CD8-positive, alpha-beta T cell (primary cell): ENCODE measurements at regions of chr4 and their contacts with region 1.

Region 1: GRCh38 chr4:27010334-27010940 is 149.8 kb downstream of the STIM2 start:
- DNase-seq: peak; percentile 23 to 76 (median 64)
- ATAC-seq: peak; percentile 90
- H3K4me3 ChIP-seq: no peak overlapping the region
- H3K4me3 Mint-ChIP-seq: no peak overlapping the region
- H3K27ac ChIP-seq: no peak overlapping the region
- H3K27ac Mint-ChIP-seq: peak overlapping the region; percentile 72
- H3K4me1 ChIP-seq: no peaks in the 10 kb centered on the region
- H3K4me1 Mint-ChIP-seq: peaks cover 13% of the 10 kb centered on the region
- H3K27me3 ChIP-seq: no peaks in the 10 kb centered on the region
- H3K27me3 Mint-ChIP-seq: no peaks in the 10 kb centered on the region
- CTCF ChIP-seq: peak; percentile 98

Region 2: DNA sequence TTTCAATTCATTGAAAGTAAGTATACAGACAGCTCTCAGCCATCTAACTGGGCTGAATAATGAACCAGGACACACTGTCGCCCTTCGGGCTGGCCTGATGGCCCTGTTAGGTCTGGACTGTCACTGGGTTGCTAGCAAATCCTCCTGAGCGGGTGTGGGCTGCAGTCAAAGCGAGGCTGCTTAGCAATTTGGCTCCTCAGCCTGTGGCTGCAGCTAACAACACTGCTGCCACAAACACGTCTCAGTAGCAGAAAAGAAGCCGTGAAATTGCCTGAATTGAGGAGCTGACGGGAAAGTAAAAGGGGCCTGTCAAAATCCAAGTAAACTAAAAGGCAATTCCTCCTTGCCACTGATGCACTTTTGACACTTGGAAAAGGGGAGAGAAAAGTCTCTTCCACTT is 1023.6 kb before region 1 on chr4:
- CTCF ChIA-PET with region 1: interaction called, 3 read pairs
- POLR2A ChIA-PET with region 1: no interaction called
- intact Hi-C with region 1: loop called in 1 of 2 experiments (anchors 5 kb)
- DNase-seq: no peak
- ATAC-seq: no peak
- H3K4me3 ChIP-seq: no peak overlapping the region
- H3K4me3 Mint-ChIP-seq: no peak overlapping the region
- H3K27ac ChIP-seq: no peak overlapping the region
- H3K27ac Mint-ChIP-seq: no peak overlapping the region
- H3K4me1 ChIP-seq: no peaks in the 10 kb centered on the region
- H3K4me1 Mint-ChIP-seq: peaks cover 4% of the 10 kb centered on the region
- H3K27me3 ChIP-seq: peaks cover 0 to under 1% of the 10 kb centered on the region in 2 experiments
- H3K27me3 Mint-ChIP-seq: peaks cover 5% of the 10 kb centered on the region
- CTCF ChIP-seq: no peak

Region 3: GRCh38 chr4:26433556-26433955 is 576.9 kb before region 1 on chr4:
- CTCF ChIA-PET with region 1: interaction called, 3 read pairs
- POLR2A ChIA-PET with region 1: no interaction called
- intact Hi-C with region 1: loop called in 1 of 2 experiments (anchors 1 kb)
- DNase-seq: no peak
- ATAC-seq: no peak
- H3K4me3 ChIP-seq: no peak overlapping the region
- H3K4me3 Mint-ChIP-seq: no peak overlapping the region
- H3K27ac ChIP-seq: no peak overlapping the region
- H3K27ac Mint-ChIP-seq: no peak overlapping the region
- H3K4me1 ChIP-seq: no peaks in the 10 kb centered on the region
- H3K4me1 Mint-ChIP-seq: no peaks in the 10 kb centered on the region
- H3K27me3 ChIP-seq: no peaks in the 10 kb centered on the region
- H3K27me3 Mint-ChIP-seq: no peaks in the 10 kb centered on the region
- CTCF ChIP-seq: no peak

Region 4: GRCh38 chr4:26719954-26720552 is 290.4 kb before region 1 on chr4:
- CTCF ChIA-PET with region 1: interaction called, 3 read pairs
- POLR2A ChIA-PET with region 1: no interaction called
- intact Hi-C with region 1: loop called (anchors 2 to 5 kb)
- DNase-seq: peak in 2 of 9 experiments; percentile 11 to 21
- ATAC-seq: no peak
- H3K4me3 ChIP-seq: no peak overlapping the region
- H3K4me3 Mint-ChIP-seq: no peak overlapping the region
- H3K27ac ChIP-seq: no peak overlapping the region
- H3K27ac Mint-ChIP-seq: no peak overlapping the region
- H3K4me1 ChIP-seq: peaks cover 13% of the 10 kb centered on the region
- H3K4me1 Mint-ChIP-seq: peaks cover 24% of the 10 kb centered on the region
- H3K27me3 ChIP-seq: no peaks in the 10 kb centered on the region
- H3K27me3 Mint-ChIP-seq: no peaks in the 10 kb centered on the region
- CTCF ChIP-seq: peak; percentile 50

Region 5: GRCh38 chr4:27684610-27685011 is 674.2 kb after region 1 on chr4:
- CTCF ChIA-PET with region 1: no interaction called
- POLR2A ChIA-PET with region 1: no interaction called
- intact Hi-C with region 1: no loop called
- DNase-seq: no peak
- ATAC-seq: no peak
- H3K4me3 ChIP-seq: no peak overlapping the region
- H3K4me3 Mint-ChIP-seq: no peak overlapping the region
- H3K27ac ChIP-seq: no peak overlapping the region
- H3K27ac Mint-ChIP-seq: no peak overlapping the region
- H3K4me1 ChIP-seq: no peaks in the 10 kb centered on the region
- H3K4me1 Mint-ChIP-seq: no peaks in the 10 kb centered on the region
- H3K27me3 ChIP-seq: no peaks in the 10 kb centered on the region
- H3K27me3 Mint-ChIP-seq: no peaks in the 10 kb centered on the region
- CTCF ChIP-seq: no peak